ENCODE measurements at regions of chr1 and their contacts with region 1.

Region 1: GRCh38 chr1:55277377-55278130 is 62.4 kb upstream of the USP24 start:
- DNase-seq: peak; percentile 89
- ATAC-seq: peak; percentile 89
- H3K4me3 ChIP-seq: peak overlapping the region in 3 of 5 experiments; percentile 13 to 45 (median 16)
- H3K4me3 Mint-ChIP-seq: peak overlapping the region; percentile 81
- H3K27ac ChIP-seq: no peak overlapping the region
- H3K27ac Mint-ChIP-seq: peak overlapping the region; percentile 77
- H3K4me1 ChIP-seq: peaks cover 16 to 17% of the 10 kb centered on the region in 2 donors
- H3K4me1 Mint-ChIP-seq: peaks cover 22% of the 10 kb centered on the region
- H3K27me3 ChIP-seq: no peaks in the 10 kb centered on the region
- H3K27me3 Mint-ChIP-seq: peaks cover 4% of the 10 kb centered on the region
- CTCF ChIP-seq: peak; percentile 87

Region 2: DNA sequence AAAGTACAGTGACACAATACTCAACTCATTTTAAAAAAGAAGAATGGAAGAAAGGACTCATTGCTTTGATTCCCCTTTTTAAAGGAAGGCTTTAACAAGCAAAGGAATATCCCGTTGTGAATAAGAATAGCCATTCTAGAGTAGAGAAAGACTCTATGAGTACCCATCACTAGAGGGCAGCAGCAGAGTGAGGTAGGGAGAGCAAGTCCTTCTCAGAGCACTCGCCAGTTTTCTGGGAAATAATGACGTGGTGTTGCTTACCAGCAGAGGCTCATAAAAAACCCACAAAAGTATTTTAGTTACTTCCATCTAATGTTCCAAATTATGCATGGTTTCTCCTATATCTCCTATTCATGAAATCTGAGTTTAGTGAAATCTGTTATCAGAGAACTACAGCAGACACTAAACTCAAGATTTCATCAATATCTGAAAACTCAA is 137.0 kb before region 1 on chr1:
- CTCF ChIA-PET with region 1: interaction called, 130 read pairs
- POLR2A ChIA-PET with region 1: interaction called, 3 read pairs
- intact Hi-C with region 1: loop called (anchors 1 kb)
- DNase-seq: peak; percentile 76
- ATAC-seq: peak; percentile 88
- H3K4me3 ChIP-seq: no peak overlapping the region
- H3K4me3 Mint-ChIP-seq: no peak overlapping the region
- H3K27ac ChIP-seq: no peak overlapping the region
- H3K27ac Mint-ChIP-seq: no peak overlapping the region
- H3K4me1 ChIP-seq: no peaks in the 10 kb centered on the region
- H3K4me1 Mint-ChIP-seq: peaks cover 3% of the 10 kb centered on the region
- H3K27me3 ChIP-seq: no peaks in the 10 kb centered on the region
- H3K27me3 Mint-ChIP-seq: no peaks in the 10 kb centered on the region
- CTCF ChIP-seq: peak; percentile 87

Region 3: GRCh38 chr1:55164906-55165305 is 112.6 kb before region 1 on chr1:
- CTCF ChIA-PET with region 1: interaction called, 23 read pairs
- POLR2A ChIA-PET with region 1: no interaction called
- intact Hi-C with region 1: no loop called
- DNase-seq: no peak
- ATAC-seq: peak; percentile 21
- H3K4me3 ChIP-seq: no peak overlapping the region
- H3K4me3 Mint-ChIP-seq: no peak overlapping the region
- H3K27ac ChIP-seq: no peak overlapping the region
- H3K27ac Mint-ChIP-seq: peak overlapping the region; percentile 32
- H3K4me1 ChIP-seq: no peaks in the 10 kb centered on the region
- H3K4me1 Mint-ChIP-seq: peaks cover 3% of the 10 kb centered on the region
- H3K27me3 ChIP-seq: no peaks in the 10 kb centered on the region
- H3K27me3 Mint-ChIP-seq: no peaks in the 10 kb centered on the region
- CTCF ChIP-seq: no peak

Region 4: GRCh38 chr1:55195521-55196233 is 81.9 kb before region 1 on chr1:
- CTCF ChIA-PET with region 1: interaction called, 15 read pairs
- POLR2A ChIA-PET with region 1: no interaction called
- intact Hi-C with region 1: no loop called
- DNase-seq: no peak
- ATAC-seq: no peak
- H3K4me3 ChIP-seq: no peak overlapping the region
- H3K4me3 Mint-ChIP-seq: no peak overlapping the region
- H3K27ac ChIP-seq: peak overlapping the region in 1 of 2 donors; percentile 50
- H3K27ac Mint-ChIP-seq: peak overlapping the region; percentile 54
- H3K4me1 ChIP-seq: peaks cover 17 to 39% of the 10 kb centered on the region in 2 donors
- H3K4me1 Mint-ChIP-seq: peaks cover 59% of the 10 kb centered on the region
- H3K27me3 ChIP-seq: no peaks in the 10 kb centered on the region
- H3K27me3 Mint-ChIP-seq: no peaks in the 10 kb centered on the region
- CTCF ChIP-seq: no peak

Region 5: GRCh38 chr1:55257958-55258357 is 19.6 kb before region 1 on chr1:
- CTCF ChIA-PET with region 1: interaction called, 21 read pairs
- POLR2A ChIA-PET with region 1: interaction called, 4 read pairs
- intact Hi-C with region 1: loop called (anchors 1 kb)
- DNase-seq: peak; percentile 87
- ATAC-seq: peak; percentile 53
- H3K4me3 ChIP-seq: peak overlapping the region in 1 of 5 experiments; percentile 24
- H3K4me3 Mint-ChIP-seq: peak overlapping the region; percentile 75
- H3K27ac ChIP-seq: peak overlapping the region; percentile 84 to 89
- H3K27ac Mint-ChIP-seq: peak overlapping the region; percentile 94
- H3K4me1 ChIP-seq: peaks cover 74 to 75% of the 10 kb centered on the region in 2 donors
- H3K4me1 Mint-ChIP-seq: peaks cover 78% of the 10 kb centered on the region
- H3K27me3 ChIP-seq: no peaks in the 10 kb centered on the region
- H3K27me3 Mint-ChIP-seq: no peaks in the 10 kb centered on the region
- CTCF ChIP-seq: no peak